PC-9 (cell line): ENCODE measurements at regions of chr6 and their contacts with region 1.

Region 1: DNA sequence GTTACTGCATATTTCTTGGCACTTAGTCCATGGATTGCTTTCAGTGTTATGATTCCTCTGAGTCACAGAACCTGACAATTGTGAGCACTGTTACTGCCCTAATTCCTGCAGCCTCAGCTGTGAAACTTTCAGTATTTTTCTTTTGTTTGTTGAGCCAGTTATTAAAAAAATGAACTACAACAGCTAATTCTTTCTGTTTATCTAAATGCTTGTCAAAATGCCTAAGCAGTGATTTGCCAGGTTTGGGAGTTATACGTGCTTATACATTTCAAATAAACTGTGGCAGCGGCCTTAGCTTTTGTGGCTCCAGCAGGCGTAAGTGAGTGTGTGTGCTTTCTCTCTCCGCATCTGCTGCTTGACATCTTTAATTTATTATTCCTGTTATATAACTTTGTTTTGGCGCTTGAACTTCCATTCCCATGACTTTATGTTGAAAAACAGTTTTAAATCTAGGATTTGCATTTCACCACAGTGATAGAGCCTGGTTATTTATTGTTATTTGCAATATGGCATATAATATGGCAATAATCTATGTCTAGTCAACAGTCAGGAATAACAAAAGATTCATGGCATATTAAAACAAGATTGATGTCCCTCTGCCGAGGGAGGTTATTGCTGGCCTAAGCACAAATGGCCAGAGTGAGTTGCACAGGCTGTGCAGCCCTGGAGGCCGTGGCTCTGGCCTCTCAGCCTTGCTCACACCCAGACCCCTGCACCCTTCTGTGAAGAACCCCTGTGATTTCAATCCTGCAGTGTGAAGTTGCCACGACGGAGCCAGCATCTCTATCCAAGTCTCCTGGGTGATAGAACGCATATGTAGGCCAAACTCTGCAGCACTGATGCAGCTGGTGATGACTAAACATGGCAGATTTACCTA is 303.4 kb downstream of the THBS2 start:
- DNase-seq: no peak
- H3K4me3 ChIP-seq: no peak overlapping the region
- H3K27ac ChIP-seq: no peak overlapping the region
- H3K4me1 ChIP-seq: no peaks in the 10 kb centered on the region
- H3K27me3 ChIP-seq: peaks cover 75% of the 10 kb centered on the region
- CTCF ChIP-seq: no peak

Region 2: GRCh38 chr6:168988801-168989200 is 38.6 kb after region 1 on chr6:
- CTCF ChIA-PET with region 1: no interaction called
- POLR2A ChIA-PET with region 1: no interaction called
- intact Hi-C with region 1: no loop called
- DNase-seq: no peak
- H3K4me3 ChIP-seq: no peak overlapping the region
- H3K27ac ChIP-seq: no peak overlapping the region
- H3K4me1 ChIP-seq: no peaks in the 10 kb centered on the region
- H3K27me3 ChIP-seq: peaks cover 6% of the 10 kb centered on the region; the same call in 1 of the 2 replicates
- CTCF ChIP-seq: no peak

Region 3: DNA sequence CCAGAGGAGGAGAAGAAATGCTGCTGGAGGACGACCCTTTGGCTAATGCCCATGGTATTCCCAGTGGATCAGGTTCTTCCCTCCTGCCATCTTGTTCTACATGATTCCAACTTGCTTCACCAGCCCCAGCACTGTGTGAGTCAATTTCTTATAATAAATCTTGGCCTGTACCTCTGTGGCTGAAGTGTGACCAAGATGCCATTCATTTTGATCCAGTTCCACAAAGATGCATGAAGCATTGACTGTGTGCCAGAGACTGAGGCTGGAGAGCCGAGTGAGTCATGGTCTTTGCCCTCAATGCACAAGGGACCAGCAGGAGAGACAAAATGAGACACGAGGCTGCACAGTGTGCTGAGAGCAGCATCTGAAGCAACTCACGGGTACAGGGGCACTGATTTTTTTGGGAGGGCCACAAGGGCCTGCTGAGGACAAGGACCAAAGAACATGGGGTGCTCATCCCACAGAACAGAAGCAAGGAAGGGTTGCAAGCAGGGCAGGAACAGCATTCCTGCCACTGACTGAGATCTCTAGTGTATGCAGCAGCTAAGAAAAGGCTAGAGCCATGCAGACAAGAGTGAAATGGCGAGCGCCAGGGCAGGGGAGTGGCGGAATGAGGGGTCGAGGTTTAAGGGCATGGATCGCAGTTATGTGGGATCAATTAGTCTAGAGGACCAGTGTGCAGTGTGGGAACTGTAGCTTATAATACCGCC is 96.4 kb after region 1 on chr6:
- CTCF ChIA-PET with region 1: no interaction called
- POLR2A ChIA-PET with region 1: interaction called, 19 read pairs
- intact Hi-C with region 1: no loop called
- DNase-seq: no peak
- H3K4me3 ChIP-seq: no peak overlapping the region
- H3K27ac ChIP-seq: no peak overlapping the region
- H3K4me1 ChIP-seq: no peaks in the 10 kb centered on the region
- H3K27me3 ChIP-seq: peaks cover 56% of the 10 kb centered on the region
- CTCF ChIP-seq: no peak